Psoas muscle (tissue), 8 donors: ENCODE measurements at regions of chr2 and their contacts with region 1.

Region 1: GRCh38 chr2:127479866-127480743 is 46.2 kb downstream of the IWS1 start:
- DNase-seq: no peak
- ATAC-seq: peak in 2 of 4 donors; percentile 20 to 44
- H3K4me3 ChIP-seq: no peak overlapping the region
- H3K27ac ChIP-seq: no peak overlapping the region
- H3K4me1 ChIP-seq: no peaks in the 10 kb centered on the region
- H3K27me3 ChIP-seq: no peaks in the 10 kb centered on the region
- CTCF ChIP-seq: no peak

Region 2: GRCh38 chr2:127324635-127325034 is 155.5 kb before region 1 on chr2:
- intact Hi-C with region 1: loop called (anchors 5 kb)
- DNase-seq: no peak
- ATAC-seq: peak in 2 of 4 donors; percentile 35 to 69
- H3K4me3 ChIP-seq: no peak overlapping the region
- H3K27ac ChIP-seq: no peak overlapping the region
- H3K4me1 ChIP-seq: no peaks in the 10 kb centered on the region
- H3K27me3 ChIP-seq: no peaks in the 10 kb centered on the region
- CTCF ChIP-seq: peak; percentile 53

Region 3: GRCh38 chr2:127531221-127531648 is 51.1 kb after region 1 on chr2:
- intact Hi-C with region 1: no loop called
- DNase-seq: no peak
- ATAC-seq: no peak
- H3K4me3 ChIP-seq: no peak overlapping the region
- H3K27ac ChIP-seq: no peak overlapping the region
- H3K4me1 ChIP-seq: no peaks in the 10 kb centered on the region
- H3K27me3 ChIP-seq: peaks cover 0 to 5% (median 0%) of the 10 kb centered on the region in 3 donors
- CTCF ChIP-seq: no peak